Posterior vena cava (tissue), 2 donors: ENCODE measurements at regions of chr3 and their contacts with region 1.

Region 1: GRCh38 chr3:58167431-58168351 is 43.1 kb downstream of the DNASE1L3 start:
- DNase-seq: peak; percentile 91

Region 2: DNA sequence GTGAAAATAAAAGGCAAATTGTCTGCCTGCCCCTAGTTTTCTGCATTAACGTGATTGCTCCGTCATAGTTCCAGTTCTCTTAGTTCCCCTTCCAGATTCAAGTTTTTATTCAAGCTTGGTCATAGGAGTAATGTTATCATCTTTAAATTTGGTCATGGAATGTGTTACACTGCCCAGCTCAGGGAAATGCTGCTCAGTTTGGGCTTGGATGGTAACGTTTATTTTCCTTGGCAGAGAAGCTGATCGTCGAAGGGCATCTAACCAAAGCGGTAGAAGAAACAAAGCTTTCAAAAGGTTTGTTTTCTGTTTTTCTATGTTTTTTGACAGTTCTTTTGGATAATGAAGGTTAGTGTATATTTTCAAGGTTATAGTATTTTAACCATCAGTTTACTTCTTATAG is 277.9 kb before region 1 on chr3:
- intact Hi-C with region 1: loop called in 1 of 2 experiments (anchors 10 kb)
- DNase-seq: no peak